ENCODE measurements at regions of chr10 and their contacts with region 1.

Region 1: GRCh38 chr10:75021379-75022249 is 89.8 kb upstream of the SAMD8 start:
- DNase-seq: peak; percentile 20
- ATAC-seq: peak; percentile 38
- H3K4me3 ChIP-seq: no peak overlapping the region
- H3K27ac ChIP-seq: peak overlapping the region; percentile 30; the same call in 1 of the 2 replicates
- H3K4me1 ChIP-seq: peaks cover 7% of the 10 kb centered on the region
- H3K27me3 ChIP-seq: no peaks in the 10 kb centered on the region
- CTCF ChIP-seq: no peak
- POLR2A ChIP-seq: no peak
- RAD21 ChIP-seq: no peak

Region 2: DNA sequence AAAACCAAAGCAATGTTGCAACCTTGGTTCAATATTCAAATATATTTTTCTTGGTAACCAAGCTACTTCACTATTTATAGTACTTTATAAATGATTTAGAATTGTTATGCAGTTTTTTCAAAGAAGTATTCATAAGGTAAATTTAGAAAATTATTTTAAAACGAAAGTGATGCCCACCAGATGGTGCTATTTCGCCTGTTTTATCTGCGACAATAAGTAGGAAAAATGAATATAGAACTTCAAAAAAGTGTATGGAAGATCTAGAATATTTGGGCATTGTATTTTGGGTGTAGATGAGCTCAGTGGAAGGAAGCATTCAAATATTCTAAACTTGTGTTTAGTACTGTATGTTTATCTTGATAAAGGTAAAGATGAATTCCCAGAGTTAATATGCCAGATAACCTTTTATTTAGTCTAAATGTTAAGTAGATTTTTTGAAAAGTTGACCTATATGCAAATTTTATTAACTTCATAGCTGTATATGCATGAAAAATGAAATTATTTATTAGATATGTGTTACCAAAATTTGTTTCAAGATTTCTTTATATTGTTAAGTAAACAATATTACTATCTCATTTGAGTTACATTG is 777.4 kb before region 1 on chr10:
- CTCF ChIA-PET with region 1: no interaction called
- POLR2A ChIA-PET with region 1: no interaction called
- dilution Hi-C with region 1: no loop called
- in situ Hi-C with region 1: no loop called
- intact Hi-C with region 1: loop called (anchors 1 kb)
- DNase-seq: peak; percentile 73
- ATAC-seq: no peak; the same call in 1 of the 2 replicates
- H3K4me3 ChIP-seq: no peak overlapping the region
- H3K27ac ChIP-seq: no peak overlapping the region
- H3K4me1 ChIP-seq: no peaks in the 10 kb centered on the region
- H3K27me3 ChIP-seq: no peaks in the 10 kb centered on the region
- CTCF ChIP-seq: peak; percentile 63
- POLR2A ChIP-seq: no peak
- RAD21 ChIP-seq: peak; percentile 63

Region 3: DNA sequence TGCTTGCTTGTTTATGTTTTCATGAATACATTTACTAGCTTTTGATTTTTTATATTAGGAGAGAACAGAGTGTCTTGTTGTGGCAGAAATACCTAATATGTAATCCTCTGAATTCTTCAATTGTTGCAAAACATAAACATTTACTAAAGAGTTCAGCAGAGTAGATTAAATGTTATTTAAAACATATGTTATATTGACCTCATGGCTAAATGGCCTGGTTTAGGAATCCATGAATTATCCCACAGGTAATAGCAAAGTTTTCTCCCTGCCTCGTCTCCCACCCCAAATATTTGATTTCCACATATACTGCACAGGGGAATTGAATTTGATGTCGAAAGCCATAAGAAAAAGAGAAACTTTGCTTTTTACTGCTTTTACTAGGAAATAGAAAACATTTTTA is 758.8 kb before region 1 on chr10:
- CTCF ChIA-PET with region 1: interaction called, 5 read pairs
- POLR2A ChIA-PET with region 1: no interaction called
- dilution Hi-C with region 1: no loop called
- in situ Hi-C with region 1: loop called (anchors 10 kb)
- intact Hi-C with region 1: loop called (anchors 1 kb)
- DNase-seq: no peak
- ATAC-seq: no peak
- H3K4me3 ChIP-seq: no peak overlapping the region
- H3K27ac ChIP-seq: no peak overlapping the region
- H3K4me1 ChIP-seq: peaks cover 2% of the 10 kb centered on the region; the same call in 1 of the 2 replicates
- H3K27me3 ChIP-seq: no peaks in the 10 kb centered on the region
- CTCF ChIP-seq: no peak
- POLR2A ChIP-seq: no peak
- RAD21 ChIP-seq: no peak